Gastrocnemius medialis (tissue), 4 donors: ENCODE measurements at regions of chr3 and their contacts with region 1.

Region 1: DNA sequence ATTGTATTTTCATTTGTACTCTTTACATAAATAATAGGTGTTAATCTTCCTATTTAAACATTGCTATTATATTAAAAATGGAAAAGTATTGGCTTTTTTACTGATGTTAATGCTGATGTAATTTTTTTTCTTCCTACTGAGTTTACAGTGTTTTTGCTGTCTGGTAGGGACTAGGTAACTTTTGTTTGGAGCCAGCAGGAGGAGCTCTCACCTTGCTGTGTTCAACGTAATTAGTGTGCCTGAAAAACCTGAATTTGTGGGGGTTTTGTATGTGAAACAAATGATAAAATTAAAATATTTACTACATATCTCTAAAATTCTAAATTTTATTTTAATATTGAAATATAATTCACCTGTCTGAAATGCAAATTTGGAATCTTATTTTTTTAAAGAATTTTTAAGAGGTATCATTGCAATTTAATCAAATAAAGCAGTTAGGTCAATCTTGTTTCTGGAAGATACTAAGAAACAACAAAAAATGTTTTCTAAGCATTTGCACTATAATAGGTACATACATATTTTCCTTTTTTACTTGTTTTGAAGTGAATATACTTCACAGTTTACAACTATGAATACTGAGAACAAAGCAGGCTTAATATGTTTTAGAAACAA is 48.8 kb downstream of the EPHA6 start:
- DNase-seq: no peak
- ATAC-seq: no peak
- H3K4me3 ChIP-seq: no peak overlapping the region
- H3K27ac ChIP-seq: no peak overlapping the region
- H3K4me1 ChIP-seq: no peaks in the 10 kb centered on the region
- H3K27me3 ChIP-seq: no peaks in the 10 kb centered on the region
- CTCF ChIP-seq: peak in 2 of 5 experiments; percentile 9 to 42
- POLR2A ChIP-seq: no peak

Region 2: GRCh38 chr3:96803860-96804259 is 59.4 kb before region 1 on chr3:
- in situ Hi-C with region 1: no loop called
- intact Hi-C with region 1: no loop called
- DNase-seq: no peak
- ATAC-seq: no peak
- H3K4me3 ChIP-seq: no peak overlapping the region
- H3K27ac ChIP-seq: no peak overlapping the region
- H3K4me1 ChIP-seq: no peaks in the 10 kb centered on the region
- H3K27me3 ChIP-seq: no peaks in the 10 kb centered on the region
- CTCF ChIP-seq: no peak
- POLR2A ChIP-seq: no peak

Region 3: DNA sequence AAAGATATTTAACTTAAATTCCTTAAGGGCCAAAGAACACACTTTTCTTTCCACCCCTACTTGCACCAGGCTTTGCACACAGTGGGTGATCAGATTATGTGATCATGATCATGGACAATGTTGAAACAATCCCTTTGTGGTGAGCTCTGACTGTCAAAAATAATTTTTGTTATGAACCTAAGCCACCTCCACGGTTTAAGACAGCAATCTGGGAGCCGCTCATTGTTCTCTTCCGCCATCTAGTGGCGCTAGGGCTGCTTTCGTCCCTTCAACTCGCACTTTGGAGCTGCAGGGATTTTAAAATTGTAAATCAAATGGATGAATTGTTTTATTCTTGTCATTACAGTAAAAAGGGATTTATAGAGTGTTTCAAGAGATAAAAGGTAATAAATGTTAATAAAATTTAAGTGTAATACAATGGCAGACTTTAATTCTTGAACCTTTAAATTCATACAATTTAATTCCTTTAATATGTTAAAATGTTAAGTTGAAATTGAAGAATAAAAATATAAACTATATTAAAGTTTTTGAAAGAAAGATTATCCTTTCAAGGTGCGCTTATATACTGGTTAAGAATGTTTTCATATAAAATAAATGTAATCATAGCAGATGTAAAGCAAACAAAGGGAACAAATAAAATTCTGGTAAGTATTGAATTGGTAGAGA is 856.1 kb after region 1 on chr3:
- in situ Hi-C with region 1: loop called in 1 of 4 experiments (anchors 25 kb)
- intact Hi-C with region 1: no loop called
- DNase-seq: peak; percentile 11 to 40
- ATAC-seq: peak; percentile 75 to 82
- H3K4me3 ChIP-seq: peak overlapping the region in 2 of 4 donors; percentile 17 to 18
- H3K27ac ChIP-seq: no peak overlapping the region
- H3K4me1 ChIP-seq: peaks cover 0 to 3% of the 10 kb centered on the region in 2 donors
- H3K27me3 ChIP-seq: no peaks in the 10 kb centered on the region
- CTCF ChIP-seq: peak; percentile 55 to 93 (median 65)
- POLR2A ChIP-seq: no peak